MCF 10A (cell line): ENCODE measurements at regions of chr1 and their contacts with region 1.

Region 1: DNA sequence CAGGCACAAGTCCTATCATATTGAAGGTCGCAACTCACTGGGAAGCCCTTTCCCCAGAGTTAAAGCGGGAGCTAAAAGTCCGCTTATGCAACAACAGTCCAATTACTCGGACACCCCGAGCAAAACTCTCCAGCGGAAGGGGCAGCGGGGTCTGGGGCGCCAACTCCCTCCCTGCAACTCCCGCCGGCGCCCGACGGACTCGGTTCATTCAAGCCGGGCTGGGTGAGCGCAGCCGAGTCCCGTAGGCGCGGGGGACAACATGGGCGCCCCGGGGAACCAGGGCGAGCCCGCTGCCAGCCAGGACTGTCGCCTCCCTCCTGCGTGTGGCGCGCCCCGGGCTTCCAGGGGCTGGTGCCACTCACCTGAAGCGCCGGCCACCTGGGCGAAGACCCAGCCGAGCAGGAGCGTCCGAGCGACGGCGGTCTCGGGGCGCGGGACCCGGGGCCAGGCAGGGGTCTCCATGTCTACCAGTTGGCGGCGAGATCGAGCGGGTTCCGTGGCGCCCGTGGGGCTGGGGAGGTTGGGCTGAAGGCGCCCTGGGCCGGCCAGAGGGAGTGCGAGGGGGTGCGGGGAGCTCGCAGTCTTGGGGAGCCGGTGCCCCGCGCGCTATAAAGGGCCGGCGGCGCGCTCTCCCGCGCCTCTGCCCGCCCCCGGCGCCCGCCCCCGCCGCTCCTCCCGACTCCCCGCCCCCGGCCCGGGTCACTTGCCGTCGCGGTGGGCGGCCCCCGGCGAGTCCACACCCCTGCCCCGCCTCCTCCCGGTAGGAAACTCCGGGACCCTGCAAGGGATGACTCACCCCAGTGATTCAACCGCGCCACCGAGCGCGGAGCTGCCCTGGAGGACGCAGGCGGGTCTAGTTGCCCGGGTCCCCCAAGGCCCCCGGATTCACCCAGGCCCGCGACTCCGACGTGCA is at the start of gene F3:
- DNase-seq: peak; percentile 91
- H3K4me3 Mint-ChIP-seq: peak within 1 kb of the TSS; percentile 92
- H3K27ac Mint-ChIP-seq: peak within 1 kb of the TSS; percentile 97
- H3K4me1 Mint-ChIP-seq: peaks cover 64% of the 10 kb centered on the region
- H3K27me3 Mint-ChIP-seq: no peaks in the 10 kb centered on the region
- CTCF ChIP-seq: no peak
- total RNA-seq, gene F3: 173 and 296 TPM in 2 replicates

Region 2: GRCh38 chr1:94527447-94528031 is 13.9 kb before region 1 on chr1:
- CTCF ChIA-PET with region 1: interaction called, 15 read pairs
- POLR2A ChIA-PET with region 1: interaction called, 30 read pairs
- intact Hi-C with region 1: no loop called
- DNase-seq: peak; percentile 64
- H3K4me3 Mint-ChIP-seq: no peak overlapping the region
- H3K27ac Mint-ChIP-seq: no peak overlapping the region
- H3K4me1 Mint-ChIP-seq: peaks cover 25% of the 10 kb centered on the region
- H3K27me3 Mint-ChIP-seq: no peaks in the 10 kb centered on the region
- CTCF ChIP-seq: no peak

Region 3: GRCh38 chr1:94599095-94599813 is 57.8 kb after region 1 on chr1:
- CTCF ChIA-PET with region 1: interaction called, 8 read pairs
- POLR2A ChIA-PET with region 1: interaction called, 28 read pairs
- intact Hi-C with region 1: loop called (anchors 2 kb)
- DNase-seq: peak; percentile 75
- H3K4me3 Mint-ChIP-seq: no peak overlapping the region
- H3K27ac Mint-ChIP-seq: no peak overlapping the region
- H3K4me1 Mint-ChIP-seq: peaks cover 43% of the 10 kb centered on the region
- H3K27me3 Mint-ChIP-seq: no peaks in the 10 kb centered on the region
- CTCF ChIP-seq: peak; percentile 43

Region 4: GRCh38 chr1:94648225-94649007 is 107.0 kb after region 1 on chr1:
- CTCF ChIA-PET with region 1: interaction called, 4 read pairs
- POLR2A ChIA-PET with region 1: interaction called, 13 read pairs
- intact Hi-C with region 1: loop called (anchors 1 kb)
- DNase-seq: peak; percentile 94
- H3K4me3 Mint-ChIP-seq: peak overlapping the region; percentile 56
- H3K27ac Mint-ChIP-seq: peak overlapping the region; percentile 93
- H3K4me1 Mint-ChIP-seq: peaks cover 25% of the 10 kb centered on the region
- H3K27me3 Mint-ChIP-seq: no peaks in the 10 kb centered on the region
- CTCF ChIP-seq: no peak

Region 5: DNA sequence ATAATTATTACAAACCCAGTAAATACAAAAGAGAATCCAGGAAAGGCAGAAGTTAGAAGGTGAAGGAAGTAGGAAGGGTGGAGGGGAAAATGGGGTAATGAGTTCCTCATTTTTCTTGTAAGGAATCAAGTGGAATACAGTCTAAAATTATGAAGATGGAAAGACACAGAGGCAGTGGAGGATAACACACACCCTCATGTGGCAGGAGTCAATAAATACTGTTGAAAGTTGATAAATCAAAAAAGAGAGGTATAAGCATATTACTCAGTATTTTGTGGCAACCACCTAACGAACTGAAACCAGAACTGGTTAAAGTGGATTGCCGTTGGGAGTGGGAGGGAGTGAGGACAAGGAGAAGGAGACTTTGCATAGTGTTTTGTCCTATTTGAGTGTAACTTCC is 200.1 kb after region 1 on chr1:
- CTCF ChIA-PET with region 1: interaction called, 3 read pairs
- POLR2A ChIA-PET with region 1: interaction called, 3 read pairs
- intact Hi-C with region 1: loop called (anchors 1 kb)
- DNase-seq: peak; percentile 32
- H3K4me3 Mint-ChIP-seq: no peak overlapping the region
- H3K27ac Mint-ChIP-seq: peak overlapping the region; percentile 61
- H3K4me1 Mint-ChIP-seq: peaks cover 61% of the 10 kb centered on the region
- H3K27me3 Mint-ChIP-seq: no peaks in the 10 kb centered on the region
- CTCF ChIP-seq: peak; percentile 40